ENCODE measurements at regions of chr14 and their contacts with region 1.

Region 1: GRCh38 chr14:71753126-71753830 is 179.0 kb upstream of the RGS6 start:
- DNase-seq: peak; percentile 91
- ATAC-seq: peak; percentile 88
- H3K4me3 ChIP-seq: peak overlapping the region in 1 of 2 experiments; percentile 15; a peak in 2 of 4 replicates
- H3K27ac ChIP-seq: peak overlapping the region; percentile 38
- H3K4me1 ChIP-seq: peaks cover 18 to 24% of the 10 kb centered on the region in 2 experiments
- H3K27me3 ChIP-seq: no peaks in the 10 kb centered on the region
- CTCF ChIP-seq: peak; percentile 87 to 98 (median 96)
- POLR2A ChIP-seq: no peak
- RAD21 ChIP-seq: peak; percentile 99

Region 2: DNA sequence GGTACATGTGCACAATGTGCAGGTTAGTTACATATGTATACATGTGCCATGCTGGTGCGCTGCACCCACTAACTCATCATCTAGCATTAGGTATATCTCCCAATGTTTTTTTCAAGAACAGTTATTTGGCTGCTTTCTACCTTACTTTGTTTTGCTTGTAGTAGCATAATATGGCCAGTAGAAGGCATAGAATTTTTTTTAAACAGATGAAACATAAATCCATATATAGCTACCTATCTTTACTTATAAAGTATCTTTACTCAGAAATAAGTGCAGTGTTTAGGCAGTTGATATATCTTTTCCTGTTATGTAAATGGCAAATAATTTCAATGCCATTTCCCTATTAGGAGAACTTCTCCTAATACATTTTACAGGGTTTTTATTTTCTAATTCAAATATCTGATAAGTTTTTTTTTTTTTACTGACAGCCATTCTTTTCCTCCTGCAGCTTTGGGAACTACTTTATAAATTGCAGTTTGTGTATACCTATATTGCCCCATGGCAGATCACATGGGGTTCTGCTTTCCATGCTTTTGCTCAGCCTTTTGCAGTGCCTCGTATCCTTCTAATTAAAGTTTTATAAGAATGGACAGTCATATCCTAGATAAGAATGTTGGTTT is 703.0 kb before region 1 on chr14:
- CTCF ChIA-PET with region 1: interaction called, 3 read pairs
- POLR2A ChIA-PET with region 1: no interaction called
- RAD21 ChIA-PET with region 1: no interaction called
- intact Hi-C with region 1: loop called (anchors 2 kb)
- DNase-seq: no peak
- ATAC-seq: peak; percentile 59; the same call in 1 of the 2 replicates
- H3K4me3 ChIP-seq: no peak overlapping the region
- H3K27ac ChIP-seq: no peak overlapping the region
- H3K4me1 ChIP-seq: no peaks in the 10 kb centered on the region
- H3K27me3 ChIP-seq: no peaks in the 10 kb centered on the region
- CTCF ChIP-seq: peak in 2 of 3 experiments; percentile 29 to 49; a peak in 3 of 6 replicates
- POLR2A ChIP-seq: no peak
- RAD21 ChIP-seq: no peak

Region 3: GRCh38 chr14:71138448-71139293 is 614.6 kb before region 1 on chr14:
- CTCF ChIA-PET with region 1: interaction called, 27 read pairs
- POLR2A ChIA-PET with region 1: no interaction called
- RAD21 ChIA-PET with region 1: interaction called, 3 read pairs
- intact Hi-C with region 1: loop called (anchors 1 kb)
- DNase-seq: peak; percentile 21
- ATAC-seq: peak; percentile 92
- H3K4me3 ChIP-seq: no peak overlapping the region
- H3K27ac ChIP-seq: no peak overlapping the region
- H3K4me1 ChIP-seq: peaks cover 3 to 10% of the 10 kb centered on the region in 2 experiments; a peak in 3 of 4 replicates
- H3K27me3 ChIP-seq: no peaks in the 10 kb centered on the region
- CTCF ChIP-seq: peak; percentile 75 to 96 (median 91)
- POLR2A ChIP-seq: no peak
- RAD21 ChIP-seq: peak; percentile 97

Region 4: GRCh38 chr14:71720978-71721624 is 32.2 kb before region 1 on chr14:
- CTCF ChIA-PET with region 1: interaction called, 9 read pairs
- POLR2A ChIA-PET with region 1: no interaction called
- RAD21 ChIA-PET with region 1: no interaction called
- intact Hi-C with region 1: loop called (anchors 1 kb)
- DNase-seq: peak; percentile 57
- ATAC-seq: peak; percentile 94
- H3K4me3 ChIP-seq: no peak overlapping the region
- H3K27ac ChIP-seq: no peak overlapping the region
- H3K4me1 ChIP-seq: no peaks in the 10 kb centered on the region
- H3K27me3 ChIP-seq: no peaks in the 10 kb centered on the region
- CTCF ChIP-seq: peak; percentile 48 to 80 (median 79); a peak in 5 of 6 replicates
- POLR2A ChIP-seq: no peak
- RAD21 ChIP-seq: peak; percentile 81